ENCODE measurements at regions of chr3 and their contacts with region 1.

Region 1: DNA sequence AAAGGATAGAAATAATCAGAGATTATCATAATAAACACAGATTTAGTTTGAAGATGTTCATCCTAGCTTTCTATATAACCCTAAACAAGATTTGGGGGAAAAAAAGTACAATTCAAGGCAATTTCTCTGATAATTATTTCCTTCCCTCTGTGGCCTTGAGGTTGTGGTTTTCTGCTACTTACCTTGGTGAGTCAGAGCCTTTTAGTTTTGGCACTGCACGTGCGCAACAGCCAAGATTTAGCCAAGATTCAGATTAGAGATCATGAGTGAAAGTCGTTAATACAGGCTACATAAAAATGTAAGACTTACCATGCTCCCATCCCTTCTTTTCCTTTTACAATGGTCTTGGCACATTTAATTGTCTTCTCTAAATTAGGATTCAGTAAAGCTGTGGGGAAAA is 6.7 kb downstream of the LYZL4 start:
- DNase-seq: no peak
- ATAC-seq: no peak
- H3K4me3 ChIP-seq: no peak overlapping the region
- H3K4me3 Mint-ChIP-seq: no peak overlapping the region
- H3K27ac ChIP-seq: no peak overlapping the region
- H3K27ac Mint-ChIP-seq: peak overlapping the region in 1 of 9 donors; percentile 8
- H3K4me1 ChIP-seq: no peaks in the 10 kb centered on the region
- H3K4me1 Mint-ChIP-seq: peaks cover 0 to 11% (median 0%) of the 10 kb centered on the region in 7 donors
- H3K27me3 ChIP-seq: no peaks in the 10 kb centered on the region
- H3K27me3 Mint-ChIP-seq: peaks cover 0 to 5% (median 0%) of the 10 kb centered on the region in 5 donors

Region 2: GRCh38 chr3:42345811-42346210 is 57.9 kb before region 1 on chr3:
- CTCF ChIA-PET with region 1: no interaction called
- POLR2A ChIA-PET with region 1: no interaction called
- intact Hi-C with region 1: loop called in 1 of 2 experiments (anchors 2 kb)
- DNase-seq: peak in 6 of 9 donors; percentile 9 to 71 (median 49)
- ATAC-seq: no peak
- H3K4me3 ChIP-seq: no peak overlapping the region
- H3K4me3 Mint-ChIP-seq: peak overlapping the region in 6 of 10 donors; percentile 43 to 76 (median 62)
- H3K27ac ChIP-seq: peak overlapping the region; percentile 62
- H3K27ac Mint-ChIP-seq: peak overlapping the region in 7 of 9 donors; percentile 67 to 92 (median 86)
- H3K4me1 ChIP-seq: peaks cover 4 to 23% of the 10 kb centered on the region in 2 donors
- H3K4me1 Mint-ChIP-seq: peaks cover 0 to 50% (median 4%) of the 10 kb centered on the region in 7 donors
- H3K27me3 ChIP-seq: no peaks in the 10 kb centered on the region
- H3K27me3 Mint-ChIP-seq: peaks cover 0 to 9% (median 0%) of the 10 kb centered on the region in 5 donors

Region 3: GRCh38 chr3:42476225-42477125 is 72.7 kb after region 1 on chr3:
- CTCF ChIA-PET with region 1: no interaction called
- POLR2A ChIA-PET with region 1: no interaction called
- intact Hi-C with region 1: no loop called
- DNase-seq: no peak
- ATAC-seq: peak; percentile 58
- H3K4me3 ChIP-seq: no peak overlapping the region
- H3K4me3 Mint-ChIP-seq: peak overlapping the region in 1 of 10 donors; percentile 27
- H3K27ac ChIP-seq: no peak overlapping the region
- H3K27ac Mint-ChIP-seq: peak overlapping the region in 2 of 9 donors; percentile 6 to 57
- H3K4me1 ChIP-seq: no peaks in the 10 kb centered on the region
- H3K4me1 Mint-ChIP-seq: peaks cover 0 to 5% (median 0%) of the 10 kb centered on the region in 7 donors
- H3K27me3 ChIP-seq: no peaks in the 10 kb centered on the region
- H3K27me3 Mint-ChIP-seq: peaks cover 13 to 33% (median 18%) of the 10 kb centered on the region in 5 donors

Region 4: GRCh38 chr3:42755681-42756578 is 352.2 kb after region 1 on chr3:
- CTCF ChIA-PET with region 1: no interaction called
- POLR2A ChIA-PET with region 1: no interaction called
- intact Hi-C with region 1: no loop called
- DNase-seq: peak in 4 of 9 donors; percentile 12 to 21 (median 20)
- ATAC-seq: peak; percentile 65
- H3K4me3 ChIP-seq: no peak overlapping the region
- H3K4me3 Mint-ChIP-seq: no peak overlapping the region
- H3K27ac ChIP-seq: no peak overlapping the region
- H3K27ac Mint-ChIP-seq: peak overlapping the region in 1 of 9 donors; percentile 41
- H3K4me1 ChIP-seq: no peaks in the 10 kb centered on the region
- H3K4me1 Mint-ChIP-seq: peaks cover 0 to 6% (median 4%) of the 10 kb centered on the region in 7 donors
- H3K27me3 ChIP-seq: no peaks in the 10 kb centered on the region
- H3K27me3 Mint-ChIP-seq: peaks cover 0 to 16% (median 0%) of the 10 kb centered on the region in 5 donors

Measured in naive thymus-derived CD4-positive, alpha-beta T cell (primary cell).